ENCODE measurements at regions of chr16 and their contacts with region 1.

Region 1: DNA sequence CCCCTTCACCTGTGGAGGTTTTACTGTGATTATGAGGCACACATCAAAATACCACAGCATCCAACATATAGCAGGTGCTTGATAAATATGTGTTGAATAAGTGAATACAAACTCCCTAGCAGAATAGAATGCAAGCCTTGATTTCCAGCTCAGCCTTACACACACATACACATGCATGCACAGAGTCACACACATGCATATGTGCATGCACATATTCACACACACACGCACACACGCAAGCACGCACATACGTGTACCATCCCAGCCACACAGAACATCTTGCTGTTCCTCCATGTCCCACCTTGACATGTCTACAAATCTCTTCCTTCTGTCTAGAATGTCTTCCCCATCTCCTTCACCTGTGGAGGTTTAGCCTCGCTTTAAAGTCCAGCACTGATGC is 160.1 kb downstream of the GRIN2A start:
- DNase-seq: no peak

Region 2: DNA sequence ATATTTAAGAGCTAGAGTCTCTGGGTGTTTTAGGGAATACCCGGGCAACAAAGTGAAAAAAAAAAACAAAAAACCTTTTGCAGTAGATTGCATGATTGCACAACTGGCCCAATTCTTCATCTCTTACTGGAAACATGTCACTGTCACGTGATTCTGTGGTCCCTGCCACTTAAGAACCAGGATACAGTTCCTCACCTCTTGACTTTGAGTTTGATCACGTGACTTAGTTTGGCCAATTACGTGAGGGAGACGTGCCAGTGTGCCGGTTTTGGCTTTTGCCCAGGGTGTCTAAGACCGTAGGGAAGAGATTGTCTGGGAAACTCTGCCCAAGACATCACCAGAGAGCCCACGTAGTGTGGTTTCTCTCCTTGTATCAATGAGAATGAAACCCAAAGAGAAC is 71.5 kb after region 1 on chr16:
- intact Hi-C with region 1: loop called in 1 of 2 experiments (anchors 2 kb)
- DNase-seq: no peak

Region 3: GRCh38 chr16:10107081-10107480 is 85.0 kb after region 1 on chr16:
- intact Hi-C with region 1: no loop called
- DNase-seq: no peak

Region 4: GRCh38 chr16:10878638-10879501 is 856.8 kb after region 1 on chr16:
- intact Hi-C with region 1: no loop called
- DNase-seq: peak; percentile 88

Measured in posterior vena cava (tissue), 2 donors.